ENCODE measurements at regions of chr13 and their contacts with region 1.

Region 1: DNA sequence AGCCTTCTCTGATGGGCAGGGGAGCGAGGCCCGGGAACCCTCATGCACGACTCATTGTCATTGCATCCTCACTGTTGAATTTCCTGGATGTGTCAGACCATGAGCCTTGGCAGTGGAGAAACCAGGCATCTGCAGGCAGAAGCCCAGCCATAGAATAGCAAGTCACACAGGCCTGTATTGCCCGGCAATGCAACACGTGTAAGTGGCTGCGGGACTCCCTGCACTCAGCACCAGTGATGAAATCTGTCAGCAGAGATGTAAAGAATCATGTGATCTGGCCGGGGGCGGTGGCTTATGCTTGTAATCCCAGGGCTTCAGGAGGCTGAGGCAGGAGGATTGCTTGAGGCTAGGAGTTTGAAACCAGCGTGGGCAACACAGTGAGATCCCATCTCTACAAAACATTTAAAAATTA is 199.8 kb downstream of the KATNAL1 start:
- ATAC-seq: no peak
- H3K4me3 ChIP-seq: no peak overlapping the region
- H3K27ac ChIP-seq: no peak overlapping the region
- H3K4me1 ChIP-seq: peaks cover 29 to 34% of the 10 kb centered on the region in 2 donors

Region 2: DNA sequence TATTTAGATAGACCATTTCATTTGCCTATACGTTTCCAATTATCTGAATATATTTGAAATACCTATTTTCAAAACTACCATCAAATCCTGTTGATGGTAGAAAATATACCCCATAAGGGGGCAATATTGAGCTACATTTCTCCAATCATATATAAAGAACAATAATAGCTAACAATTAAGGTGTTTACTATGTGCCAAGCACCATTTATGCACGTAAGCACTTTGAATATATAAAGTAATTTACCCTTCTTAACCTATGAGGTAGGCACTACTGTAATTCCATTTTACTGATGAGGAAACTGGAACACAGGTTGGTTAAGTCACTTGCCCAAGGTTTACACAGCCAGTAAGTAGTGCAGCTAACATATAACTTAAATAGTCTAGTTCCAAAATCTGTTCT is 336.3 kb before region 1 on chr13:
- in situ Hi-C with region 1: loop called in 3 of 9 experiments (anchors 10 to 25 kb)
- ATAC-seq: peak in 3 of 8 experiments; percentile 22 to 45 (median 38)
- H3K4me3 ChIP-seq: no peak overlapping the region
- H3K27ac ChIP-seq: no peak overlapping the region
- H3K4me1 ChIP-seq: peaks cover 6 to 16% of the 10 kb centered on the region in 2 donors

Region 3: DNA sequence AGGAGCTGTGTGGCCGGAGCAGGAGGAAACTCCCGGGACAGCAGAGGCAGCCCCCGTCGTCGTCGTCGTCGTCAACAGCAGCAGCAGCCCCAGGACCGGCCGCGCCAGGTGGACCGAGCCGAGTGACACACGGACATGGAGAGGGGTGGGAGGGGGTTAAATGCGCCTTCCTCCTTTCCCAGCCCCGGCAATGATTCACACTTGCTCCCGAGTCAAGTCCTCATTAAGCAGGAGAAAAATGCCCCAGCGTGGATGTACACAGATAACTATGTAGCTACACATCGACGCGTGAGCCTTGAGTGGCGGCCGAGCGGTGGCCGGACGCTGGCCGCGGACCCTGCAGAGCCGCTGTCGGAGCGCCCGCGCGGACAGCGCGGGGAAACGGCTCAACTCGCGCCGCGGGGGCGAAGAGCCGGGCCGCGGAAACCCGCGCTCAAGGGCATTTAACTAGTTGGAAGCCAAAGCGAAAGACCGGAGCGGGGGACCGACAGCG is 257.8 kb before region 1 on chr13:
- in situ Hi-C with region 1: loop called in 3 of 9 experiments (anchors 10 to 25 kb)
- ATAC-seq: peak; percentile 22 to 55 (median 46)
- H3K4me3 ChIP-seq: peak overlapping the region; percentile 57 to 97 (median 87)
- H3K27ac ChIP-seq: peak overlapping the region; percentile 94 to 97
- H3K4me1 ChIP-seq: peaks cover 0 to 12% of the 10 kb centered on the region in 2 donors

Measured in motor neuron (in vitro differentiated cells).